Ascending aorta (tissue), 2 donors: ENCODE measurements at regions of chr19 and their contacts with region 1.

Region 1: DNA sequence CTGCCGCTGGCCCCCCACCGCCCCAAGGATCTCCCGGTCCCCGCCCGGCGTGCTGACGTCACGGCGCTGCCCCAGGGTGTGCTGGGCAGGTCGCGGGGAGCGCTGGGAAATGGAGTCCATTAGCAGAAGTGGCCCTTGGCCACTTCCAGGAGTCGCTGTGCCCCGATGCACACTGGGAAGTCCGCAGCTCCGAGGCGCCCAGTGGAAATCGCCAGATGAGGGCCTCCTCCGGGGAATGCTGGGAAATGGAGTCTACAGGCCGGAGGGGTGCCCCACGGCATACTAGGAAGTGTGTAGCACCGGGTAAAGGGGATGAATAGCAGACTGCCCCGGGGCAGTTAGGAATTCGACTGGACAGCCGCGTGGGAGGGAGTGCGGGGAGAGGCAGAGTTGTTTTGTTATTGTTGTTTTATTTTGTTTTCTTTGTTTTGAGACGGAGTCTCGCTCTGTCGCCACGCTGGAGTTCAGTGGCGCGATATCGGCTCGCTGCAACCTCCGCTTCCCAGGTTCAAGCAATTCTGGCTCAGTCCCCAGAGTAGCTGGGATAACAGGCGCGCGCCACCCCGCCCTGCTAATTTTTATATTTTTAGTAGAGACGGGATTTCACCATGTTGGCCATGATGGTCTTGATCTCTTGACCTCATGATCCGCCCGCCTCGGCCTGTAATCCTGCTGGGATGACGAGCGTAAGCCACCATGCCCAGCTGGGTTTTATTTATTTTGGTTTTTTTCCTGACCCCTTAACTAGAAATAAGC is at the start of gene PPP1R12C:
- DNase-seq: peak; percentile 98 to 100
- H3K4me3 ChIP-seq: peak within 1 kb of the TSS; percentile 76 to 81
- H3K27ac ChIP-seq: peak within 1 kb of the TSS; percentile 79 to 87
- H3K4me1 ChIP-seq: peaks cover 13 to 37% of the 10 kb centered on the region in 2 donors
- H3K27me3 ChIP-seq: no peaks in the 10 kb centered on the region
- CTCF ChIP-seq: no peak
- total RNA-seq, gene PPP1R12C: 219 TPM

Region 2: DNA sequence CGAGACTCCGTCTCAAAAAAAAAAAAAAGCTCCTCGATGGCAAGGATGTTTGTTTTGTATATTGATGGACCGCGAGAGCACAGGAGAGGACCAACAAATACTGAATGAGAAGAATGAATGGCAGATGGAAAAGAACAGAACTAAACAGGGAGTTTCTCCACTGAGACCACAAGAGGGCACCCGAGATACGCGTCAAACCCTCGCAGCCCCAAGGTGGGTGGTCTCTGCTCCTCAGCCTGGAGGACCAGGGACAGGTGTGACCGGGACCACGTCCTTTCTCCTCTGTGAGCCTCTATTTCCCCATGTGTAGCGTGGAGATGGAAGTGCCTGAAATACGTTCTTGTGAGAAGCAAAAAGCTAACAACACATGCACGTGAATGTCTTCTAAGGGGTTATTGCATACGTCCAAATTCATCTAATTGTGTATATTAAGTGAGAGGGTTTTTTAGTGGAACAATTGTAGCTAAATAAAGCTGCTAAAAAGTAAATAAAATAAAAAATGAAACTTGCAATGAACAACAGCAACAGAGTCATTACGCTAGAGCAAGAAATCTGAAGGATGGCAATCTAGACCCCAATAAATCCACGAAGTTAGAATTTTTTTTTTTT is 636.4 kb before region 1 on chr19:
- intact Hi-C with region 1: loop called (anchors 10 kb)
- DNase-seq: no peak
- H3K4me3 ChIP-seq: no peak overlapping the region
- H3K27ac ChIP-seq: no peak overlapping the region
- H3K4me1 ChIP-seq: no peaks in the 10 kb centered on the region
- H3K27me3 ChIP-seq: no peaks in the 10 kb centered on the region
- CTCF ChIP-seq: peak in 2 of 3 experiments; percentile 55 to 66

Region 3: DNA sequence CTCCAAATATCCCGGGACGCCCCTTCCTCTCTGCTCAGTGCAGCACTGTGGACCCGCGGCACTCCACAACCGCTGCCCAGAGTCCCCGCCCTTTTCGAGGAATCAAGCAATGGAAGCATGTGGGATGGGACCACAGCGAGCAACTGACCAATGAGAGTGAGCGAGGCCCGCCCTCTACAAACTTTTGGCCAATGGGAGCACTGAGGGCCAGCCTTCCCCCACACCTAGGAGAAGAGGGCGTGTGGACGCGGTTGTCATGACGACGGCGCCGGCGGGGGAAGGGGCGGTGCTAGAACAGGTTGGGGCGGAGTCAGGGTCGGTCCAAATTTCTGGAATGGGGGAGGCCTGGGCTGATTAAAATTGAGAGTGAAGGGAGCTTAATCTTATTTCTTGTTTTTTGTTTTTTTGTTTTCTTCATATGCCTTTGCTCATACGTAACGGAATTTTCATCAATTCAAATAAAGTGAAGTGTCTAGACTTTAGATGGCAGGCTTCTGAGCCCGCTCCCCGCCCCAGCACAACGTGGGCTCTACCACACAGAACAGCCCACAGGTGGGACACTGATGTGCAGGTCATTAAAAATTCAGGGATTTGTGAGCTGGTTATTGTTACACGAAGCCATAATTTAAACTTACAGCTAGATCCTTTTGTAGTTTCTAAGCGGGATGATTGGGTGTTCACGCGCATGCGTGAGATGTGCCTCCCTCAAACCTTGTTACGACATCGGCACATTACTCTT is 48.9 kb after region 1 on chr19 and contains the start of gene DNAAF3:
- intact Hi-C with region 1: no loop called
- DNase-seq: peak; percentile 53 to 90
- H3K4me3 ChIP-seq: peak within 1 kb of the TSS; percentile 34 to 47
- H3K27ac ChIP-seq: no peak within 1 kb of the TSS
- H3K4me1 ChIP-seq: no peaks in the 10 kb centered on the region
- H3K27me3 ChIP-seq: peaks cover 32% of the 10 kb centered on the region
- CTCF ChIP-seq: no peak
- total RNA-seq, gene DNAAF3: not detected

Region 4: GRCh38 chr19:55189424-55189823 is 71.6 kb after region 1 on chr19:
- intact Hi-C with region 1: no loop called
- DNase-seq: peak in 1 of 2 donors; percentile 17
- H3K4me3 ChIP-seq: no peak overlapping the region
- H3K27ac ChIP-seq: no peak overlapping the region
- H3K4me1 ChIP-seq: no peaks in the 10 kb centered on the region
- H3K27me3 ChIP-seq: no peaks in the 10 kb centered on the region
- CTCF ChIP-seq: no peak

Region 5: GRCh38 chr19:55258828-55259539 is 141.2 kb after region 1 on chr19 and contains the start of gene PPP6R1:
- intact Hi-C with region 1: loop called (anchors 1 kb)
- DNase-seq: peak; percentile 92 to 99
- H3K4me3 ChIP-seq: peak within 1 kb of the TSS; percentile 85 to 87
- H3K27ac ChIP-seq: peak within 1 kb of the TSS; percentile 84 to 88
- H3K4me1 ChIP-seq: peaks cover 8 to 24% of the 10 kb centered on the region in 2 donors
- H3K27me3 ChIP-seq: no peaks in the 10 kb centered on the region
- CTCF ChIP-seq: peak in 1 of 3 experiments; percentile 15
- total RNA-seq, gene PPP6R1: 68.3 TPM

Region 6: GRCh38 chr19:55407800-55408532 is 290.2 kb after region 1 on chr19:
- intact Hi-C with region 1: loop called (anchors 5 kb)
- DNase-seq: peak; percentile 95 to 99
- H3K4me3 ChIP-seq: peak overlapping the region; percentile 86 to 92
- H3K27ac ChIP-seq: peak overlapping the region; percentile 96 to 99
- H3K4me1 ChIP-seq: peaks cover 11 to 13% of the 10 kb centered on the region in 2 donors
- H3K27me3 ChIP-seq: no peaks in the 10 kb centered on the region
- CTCF ChIP-seq: no peak

Region 7: GRCh38 chr19:55653758-55654539 is 536.1 kb after region 1 on chr19:
- intact Hi-C with region 1: loop called (anchors 10 kb)
- DNase-seq: peak; percentile 98 to 100
- H3K4me3 ChIP-seq: peak overlapping the region; percentile 77 to 89
- H3K27ac ChIP-seq: peak overlapping the region; percentile 97
- H3K4me1 ChIP-seq: peaks cover 20 to 36% of the 10 kb centered on the region in 2 donors
- H3K27me3 ChIP-seq: no peaks in the 10 kb centered on the region
- CTCF ChIP-seq: peak; percentile 94 to 100 (median 96)